ENCODE measurements at regions of chr14 and their contacts with region 1.

Region 1: GRCh38 chr14:81170104-81170828 is 50.5 kb downstream of the GTF2A1 start:
- DNase-seq: peak; percentile 82
- H3K4me3 Mint-ChIP-seq: peak overlapping the region; percentile 89
- H3K27ac Mint-ChIP-seq: peak overlapping the region; percentile 94
- H3K4me1 Mint-ChIP-seq: peaks cover 40% of the 10 kb centered on the region
- H3K27me3 Mint-ChIP-seq: no peaks in the 10 kb centered on the region

Region 2: GRCh38 chr14:80941241-80942182 is 228.8 kb before region 1 on chr14 and contains the start of gene CEP128:
- intact Hi-C with region 1: loop called (anchors 1 kb)
- DNase-seq: peak; percentile 79
- H3K4me3 Mint-ChIP-seq: peak within 1 kb of the TSS; percentile 88
- H3K27ac Mint-ChIP-seq: peak within 1 kb of the TSS; percentile 88
- H3K4me1 Mint-ChIP-seq: peaks cover 30% of the 10 kb centered on the region
- H3K27me3 Mint-ChIP-seq: no peaks in the 10 kb centered on the region
- total RNA-seq, gene CEP128: 18.2 and 22.0 TPM in 2 replicates

Region 3: DNA sequence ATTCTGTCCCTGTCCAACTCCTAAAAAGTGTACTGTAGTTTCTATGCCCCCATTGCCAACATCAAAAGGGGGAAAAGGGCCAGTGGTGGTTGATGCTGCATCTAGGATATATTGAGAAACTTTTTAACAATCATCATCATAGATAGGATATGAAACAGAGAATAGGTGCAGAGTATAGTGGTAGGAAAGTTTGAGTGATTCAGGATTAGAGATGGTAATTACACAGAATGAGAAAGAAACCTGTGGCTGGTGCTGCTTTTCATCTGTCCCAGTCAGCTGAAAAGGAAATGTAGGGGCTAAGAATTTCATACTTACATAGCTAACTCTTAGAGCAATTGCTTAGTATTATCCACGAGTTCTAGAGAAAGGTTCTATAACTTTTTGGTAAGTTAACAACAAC is 17.1 kb before region 1 on chr14:
- intact Hi-C with region 1: loop called (anchors 1 kb)
- DNase-seq: no peak
- H3K4me3 Mint-ChIP-seq: no peak overlapping the region
- H3K27ac Mint-ChIP-seq: peak overlapping the region; percentile 4
- H3K4me1 Mint-ChIP-seq: peaks cover 17% of the 10 kb centered on the region
- H3K27me3 Mint-ChIP-seq: peaks cover 2% of the 10 kb centered on the region

Region 4: DNA sequence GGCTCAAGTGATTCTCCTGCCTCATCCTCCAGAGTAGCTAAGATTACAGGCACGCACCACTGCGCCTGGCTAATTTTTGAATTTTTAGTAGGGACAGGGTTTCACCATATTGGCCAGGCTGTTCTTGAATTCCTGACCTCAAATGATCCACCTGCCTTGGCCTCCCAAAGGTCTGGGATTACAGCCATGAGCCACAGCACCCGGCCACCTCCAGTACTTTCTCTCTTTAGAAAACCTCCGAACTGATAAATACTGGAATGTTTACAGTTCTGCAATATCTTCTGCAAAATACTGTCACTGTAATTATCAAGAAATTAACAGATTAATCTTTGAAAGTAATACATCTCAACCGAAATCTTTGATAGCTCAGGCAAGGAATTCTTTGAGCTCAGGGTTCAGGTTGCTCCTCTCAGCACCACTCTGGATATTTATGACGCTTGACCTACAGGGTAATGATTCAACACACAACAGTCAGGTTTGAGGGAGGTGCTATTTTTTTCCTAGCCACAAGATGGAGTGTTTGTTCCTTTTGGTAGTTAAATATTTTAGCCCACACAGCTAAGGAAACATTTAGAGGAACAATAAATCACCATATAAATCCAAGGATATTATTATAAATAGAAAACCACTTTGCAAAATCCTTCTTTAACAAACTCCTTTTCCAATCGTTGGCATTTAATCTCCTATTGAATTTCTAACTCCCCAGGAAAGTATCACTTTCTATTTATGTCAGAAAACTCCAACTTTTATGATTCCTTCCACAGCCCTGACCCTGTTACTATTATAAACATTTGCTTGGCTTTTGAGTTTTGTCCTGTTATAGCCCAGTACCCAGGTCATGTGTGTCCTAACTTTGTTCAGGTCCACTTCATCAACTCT is 99.1 kb after region 1 on chr14:
- intact Hi-C with region 1: loop called (anchors 5 kb)
- DNase-seq: no peak
- H3K4me3 Mint-ChIP-seq: no peak overlapping the region
- H3K27ac Mint-ChIP-seq: no peak overlapping the region
- H3K4me1 Mint-ChIP-seq: peaks cover 7% of the 10 kb centered on the region
- H3K27me3 Mint-ChIP-seq: peaks cover 26% of the 10 kb centered on the region

Region 5: GRCh38 chr14:81533536-81534343 is 363.5 kb after region 1 on chr14 and contains the start of gene SEL1L:
- intact Hi-C with region 1: loop called (anchors 1 kb)
- DNase-seq: peak; percentile 99
- H3K4me3 Mint-ChIP-seq: peak within 1 kb of the TSS; percentile 95
- H3K27ac Mint-ChIP-seq: peak within 1 kb of the TSS; percentile 59
- H3K4me1 Mint-ChIP-seq: peaks cover 41% of the 10 kb centered on the region
- H3K27me3 Mint-ChIP-seq: peaks cover 6% of the 10 kb centered on the region
- total RNA-seq, gene SEL1L: 55.9 and 56.1 TPM in 2 replicates

Region 6: GRCh38 chr14:81805745-81806144 is 635.5 kb after region 1 on chr14:
- intact Hi-C with region 1: no loop called
- DNase-seq: no peak
- H3K4me3 Mint-ChIP-seq: no peak overlapping the region
- H3K27ac Mint-ChIP-seq: no peak overlapping the region
- H3K4me1 Mint-ChIP-seq: no peaks in the 10 kb centered on the region
- H3K27me3 Mint-ChIP-seq: no peaks in the 10 kb centered on the region